K562 (cell line): ENCODE measurements at regions of chr6 and their contacts with region 1.

Region 1: DNA sequence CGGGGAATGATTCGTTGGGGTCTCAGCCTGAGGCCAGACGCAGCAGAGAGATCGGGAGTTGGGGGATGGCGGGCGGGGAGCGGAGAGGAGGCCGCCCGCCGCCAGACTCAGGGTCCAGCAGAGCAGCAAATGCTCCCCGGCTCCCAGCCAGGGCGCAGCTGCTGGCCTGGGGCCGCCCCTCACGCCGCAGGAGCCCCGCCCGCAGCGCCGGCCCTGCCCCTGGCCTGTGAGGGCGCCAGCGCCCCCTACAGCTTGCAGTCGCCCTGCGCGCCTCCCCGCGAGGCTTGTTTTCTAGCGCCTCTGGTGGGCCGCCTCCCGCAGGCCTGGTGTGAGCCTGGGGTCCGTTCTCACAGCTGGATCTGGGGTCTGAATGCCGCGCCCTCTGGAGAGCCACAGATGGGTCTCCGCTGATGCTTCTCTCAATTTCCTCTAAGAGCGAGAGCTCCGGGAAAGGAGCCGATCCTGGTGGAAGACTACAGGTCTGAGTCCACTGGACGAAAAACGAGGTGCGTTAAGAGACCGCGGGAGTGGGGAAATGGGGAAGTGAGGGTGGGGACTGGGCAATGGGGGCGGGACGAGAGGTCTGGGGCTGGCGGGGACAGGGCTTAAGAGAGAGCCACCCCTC is 29.9 kb downstream of the TRIM38 start:
- DNase-seq: peak; percentile 95 to 98 (median 95)
- ATAC-seq: peak; percentile 93
- H3K4me3 ChIP-seq: peak overlapping the region; percentile 72
- H3K27ac ChIP-seq: peak overlapping the region; percentile 95
- H3K4me1 ChIP-seq: peaks cover 10 to 11% of the 10 kb centered on the region in 2 experiments
- H3K27me3 ChIP-seq: no peaks in the 10 kb centered on the region
- CTCF ChIP-seq: peak; percentile 100
- EP300 ChIP-seq: peak; percentile 44
- POLR2A ChIP-seq: peak; percentile 93
- RAD21 ChIP-seq: peak; percentile 82 to 91

Region 2: GRCh38 chr6:25697537-25698345 is 294.8 kb before region 1 on chr6:
- CTCF ChIA-PET with region 1: no interaction called
- POLR2A ChIA-PET with region 1: no interaction called
- in situ Hi-C with region 1: no loop called
- intact Hi-C with region 1: no loop called
- DNase-seq: no peak
- ATAC-seq: no peak
- H3K4me3 ChIP-seq: no peak overlapping the region
- H3K27ac ChIP-seq: no peak overlapping the region
- H3K4me1 ChIP-seq: peaks cover 0 to 7% of the 10 kb centered on the region in 2 experiments; a peak in 2 of 5 replicates
- H3K27me3 ChIP-seq: no peaks in the 10 kb centered on the region
- CTCF ChIP-seq: no peak
- EP300 ChIP-seq: no peak
- POLR2A ChIP-seq: no peak
- RAD21 ChIP-seq: no peak

Region 3: GRCh38 chr6:25788305-25788922 is 204.1 kb before region 1 on chr6:
- CTCF ChIA-PET with region 1: interaction called, 5 read pairs
- POLR2A ChIA-PET with region 1: no interaction called
- in situ Hi-C with region 1: no loop called
- intact Hi-C with region 1: loop called (anchors 2 kb)
- DNase-seq: peak; percentile 51 to 73 (median 61)
- ATAC-seq: peak; percentile 99
- H3K4me3 ChIP-seq: no peak overlapping the region
- H3K27ac ChIP-seq: no peak overlapping the region; the same call in 2 of the 3 replicates
- H3K4me1 ChIP-seq: no peaks in the 10 kb centered on the region
- H3K27me3 ChIP-seq: no peaks in the 10 kb centered on the region; a peak in 1 of 5 replicates
- CTCF ChIP-seq: peak; percentile 77 to 89 (median 77)
- EP300 ChIP-seq: no peak
- POLR2A ChIP-seq: no peak
- RAD21 ChIP-seq: peak; percentile 83 to 87

Region 4: DNA sequence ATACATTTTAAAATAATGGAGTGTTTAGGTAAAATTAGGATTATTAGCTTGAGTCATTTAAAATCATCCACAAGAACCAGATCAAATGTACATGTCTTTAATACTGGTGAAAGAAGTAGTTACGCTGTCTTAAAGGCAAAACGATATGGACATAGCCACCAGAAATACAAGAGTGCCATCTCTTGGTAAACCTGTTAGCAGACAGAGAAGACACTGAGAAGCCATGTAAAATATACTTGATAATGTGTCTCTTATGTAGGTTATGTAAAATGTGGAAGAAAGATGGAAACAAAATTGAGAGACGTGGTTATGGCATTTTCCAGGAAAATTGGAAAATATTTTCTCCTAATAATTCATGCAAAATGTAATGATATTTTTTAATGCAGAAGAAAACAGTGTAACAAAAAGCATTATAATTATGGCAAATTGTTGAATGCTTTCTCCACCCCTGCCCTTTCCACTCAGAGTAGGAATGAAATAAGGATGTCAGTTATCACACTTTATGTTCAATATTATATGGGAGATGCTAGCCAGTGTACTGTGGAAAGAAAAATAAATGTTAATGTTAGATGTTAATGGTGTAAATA is 49.9 kb before region 1 on chr6:
- CTCF ChIA-PET with region 1: no interaction called
- POLR2A ChIA-PET with region 1: interaction called, 3 read pairs
- in situ Hi-C with region 1: no loop called
- intact Hi-C with region 1: loop called (anchors 5 kb)
- DNase-seq: peak in 2 of 4 experiments; percentile 33 to 58
- ATAC-seq: peak; percentile 95
- H3K4me3 ChIP-seq: no peak overlapping the region
- H3K27ac ChIP-seq: no peak overlapping the region
- H3K4me1 ChIP-seq: no peaks in the 10 kb centered on the region
- H3K27me3 ChIP-seq: no peaks in the 10 kb centered on the region; a peak in 1 of 5 replicates
- CTCF ChIP-seq: peak; percentile 63 to 91 (median 64); a peak in 5 of 6 replicates
- EP300 ChIP-seq: no peak
- POLR2A ChIP-seq: no peak
- RAD21 ChIP-seq: peak; percentile 97 to 99

Region 5: DNA sequence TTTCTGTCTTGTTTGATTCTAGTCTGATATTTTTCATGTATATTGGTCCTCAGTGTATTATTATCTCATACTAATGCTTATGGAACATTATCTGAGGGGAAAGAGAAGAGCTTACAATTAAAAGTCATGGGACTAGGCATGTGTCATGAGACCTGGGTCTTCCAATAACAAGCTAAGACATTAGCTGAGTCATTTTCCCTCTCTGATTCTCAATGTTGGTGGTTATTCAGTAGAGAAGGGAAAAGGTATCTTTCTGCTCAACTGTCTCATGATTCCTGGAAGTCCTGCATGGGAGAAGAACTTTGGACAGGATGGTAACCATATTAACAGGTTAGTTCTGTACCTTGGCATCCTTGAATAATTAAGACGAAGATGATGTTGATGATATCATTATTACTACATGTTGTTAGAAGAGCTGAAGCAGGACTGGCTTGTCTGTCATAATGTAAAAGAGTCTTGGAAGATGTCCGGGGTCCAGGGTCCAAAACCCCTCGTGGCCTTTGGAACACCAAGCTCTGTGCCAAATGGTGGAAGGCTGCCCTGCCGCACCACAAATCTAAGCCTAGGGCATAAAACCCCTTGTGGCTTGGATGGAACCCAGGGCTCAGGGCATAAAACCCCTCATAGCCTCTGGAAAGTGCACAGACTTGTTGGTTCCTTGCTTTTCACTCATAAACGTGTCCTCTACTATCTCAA is 10.8 kb before region 1 on chr6:
- CTCF ChIA-PET with region 1: no interaction called
- POLR2A ChIA-PET with region 1: interaction called, 19 read pairs
- in situ Hi-C with region 1: no loop called
- intact Hi-C with region 1: no loop called
- DNase-seq: no peak
- ATAC-seq: peak; percentile 57; the same call in 2 of the 3 replicates
- H3K4me3 ChIP-seq: no peak overlapping the region
- H3K27ac ChIP-seq: no peak overlapping the region
- H3K4me1 ChIP-seq: peaks cover 0 to 4% of the 10 kb centered on the region in 2 experiments; a peak in 1 of 5 replicates
- H3K27me3 ChIP-seq: no peaks in the 10 kb centered on the region
- CTCF ChIP-seq: no peak
- EP300 ChIP-seq: no peak
- POLR2A ChIP-seq: no peak
- RAD21 ChIP-seq: no peak

Region 6: DNA sequence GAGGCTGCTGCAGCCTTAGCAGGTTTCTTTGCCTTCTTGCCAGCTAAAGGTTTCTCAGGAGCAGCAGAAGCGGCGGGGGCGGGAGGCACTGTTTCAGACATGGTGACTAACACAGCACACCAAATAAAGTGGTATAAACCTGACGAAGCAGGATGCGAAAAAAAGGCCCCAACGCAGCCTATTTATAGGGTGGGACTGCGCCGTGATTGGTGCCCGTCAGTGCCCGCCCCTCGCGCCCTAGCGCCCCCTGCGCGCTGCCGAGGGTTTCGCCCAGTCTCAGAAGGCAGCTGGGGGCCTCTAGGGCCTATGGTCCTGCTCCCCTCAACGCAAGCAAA is 25.1 kb after region 1 on chr6:
- CTCF ChIA-PET with region 1: no interaction called
- POLR2A ChIA-PET with region 1: interaction called, 22 read pairs
- in situ Hi-C with region 1: no loop called
- intact Hi-C with region 1: no loop called
- DNase-seq: no peak
- ATAC-seq: no peak
- H3K4me3 ChIP-seq: no peak overlapping the region
- H3K27ac ChIP-seq: no peak overlapping the region
- H3K4me1 ChIP-seq: peaks cover 5 to 18% of the 10 kb centered on the region in 2 experiments; a peak in 4 of 5 replicates
- H3K27me3 ChIP-seq: no peaks in the 10 kb centered on the region
- CTCF ChIP-seq: no peak
- EP300 ChIP-seq: no peak
- POLR2A ChIP-seq: no peak
- RAD21 ChIP-seq: no peak